Testis (tissue), 5 donors: ENCODE measurements at regions of chrX and their contacts with region 1.

Region 1: GRCh38 chrX:11533211-11533651 is 132.5 kb downstream of the ARHGAP6 start:
- DNase-seq: no peak
- H3K4me3 ChIP-seq: no peak overlapping the region
- H3K27ac ChIP-seq: no peak overlapping the region
- H3K4me1 ChIP-seq: no peaks in the 10 kb centered on the region
- H3K27me3 ChIP-seq: no peaks in the 10 kb centered on the region
- CTCF ChIP-seq: peak; percentile 72 to 95 (median 83)
- POLR2A ChIP-seq: no peak

Region 2: GRCh38 chrX:11143931-11144678 is 389.1 kb before region 1 on chrX:
- intact Hi-C with region 1: loop called (anchors 5 kb)
- DNase-seq: peak; percentile 83
- H3K4me3 ChIP-seq: no peak overlapping the region
- H3K27ac ChIP-seq: no peak overlapping the region
- H3K4me1 ChIP-seq: no peaks in the 10 kb centered on the region
- H3K27me3 ChIP-seq: no peaks in the 10 kb centered on the region
- CTCF ChIP-seq: peak; percentile 51 to 73 (median 58)
- POLR2A ChIP-seq: no peak

Region 3: DNA sequence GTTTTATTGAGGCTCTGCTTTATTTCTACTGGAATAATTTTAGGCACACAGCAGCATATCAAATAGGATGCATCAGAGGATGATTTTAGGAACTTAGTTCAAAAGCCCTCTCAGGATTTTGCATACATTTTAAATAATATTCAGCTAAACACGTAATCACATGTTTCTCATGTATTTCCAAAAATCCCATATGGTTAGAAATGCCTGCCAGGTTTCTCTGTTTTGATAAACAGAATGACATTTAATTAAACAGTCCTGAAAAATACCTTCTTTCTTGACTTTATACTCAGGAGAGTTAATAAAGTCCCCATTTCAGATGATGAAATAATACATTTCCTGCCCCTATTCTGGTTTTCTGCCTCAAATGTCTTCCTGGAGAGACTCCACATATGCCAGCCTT is 326.5 kb before region 1 on chrX:
- intact Hi-C with region 1: no loop called
- DNase-seq: no peak
- H3K4me3 ChIP-seq: no peak overlapping the region
- H3K27ac ChIP-seq: no peak overlapping the region
- H3K4me1 ChIP-seq: no peaks in the 10 kb centered on the region
- H3K27me3 ChIP-seq: no peaks in the 10 kb centered on the region
- CTCF ChIP-seq: no peak
- POLR2A ChIP-seq: no peak

Region 4: GRCh38 chrX:11619441-11619840 is 86.2 kb after region 1 on chrX:
- intact Hi-C with region 1: no loop called
- DNase-seq: no peak
- H3K4me3 ChIP-seq: no peak overlapping the region
- H3K27ac ChIP-seq: no peak overlapping the region
- H3K4me1 ChIP-seq: no peaks in the 10 kb centered on the region
- H3K27me3 ChIP-seq: no peaks in the 10 kb centered on the region
- CTCF ChIP-seq: no peak
- POLR2A ChIP-seq: no peak